ENCODE measurements at regions of chr4 and their contacts with region 1.

Region 1: DNA sequence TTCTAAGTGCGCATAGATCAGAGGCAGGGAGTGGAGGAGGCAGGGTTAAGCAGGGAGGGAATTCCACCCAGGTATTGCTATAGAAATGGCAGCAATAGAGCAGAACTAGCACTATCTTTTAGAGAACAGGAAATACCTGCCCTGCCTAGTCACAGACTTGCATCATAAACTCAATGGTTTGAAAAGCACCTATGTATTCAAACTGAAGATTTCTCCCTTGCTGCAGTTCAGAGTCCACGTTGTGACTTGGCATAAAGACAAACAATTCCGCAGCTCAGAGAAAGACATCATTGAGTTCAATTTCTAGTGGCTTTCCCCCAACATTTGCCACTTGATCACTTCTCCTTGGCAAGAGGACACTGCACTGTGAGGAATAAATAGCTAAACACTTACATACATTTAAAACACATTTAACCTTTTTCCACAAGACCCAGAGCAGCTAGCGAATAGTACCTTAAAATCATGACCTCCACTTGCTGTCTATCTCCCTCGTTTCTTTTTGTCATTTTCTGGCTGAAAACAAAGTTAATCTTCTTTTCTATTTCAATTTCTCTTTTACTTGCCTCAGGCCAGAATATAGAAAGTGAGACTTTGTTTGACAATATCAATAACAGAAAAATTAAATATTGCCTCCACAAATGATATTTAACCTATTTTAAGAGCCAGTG is 42.4 kb downstream of the SLC7A11 start:
- DNase-seq: no peak
- ATAC-seq: peak; percentile 89
- H3K4me3 ChIP-seq: peak overlapping the region; percentile 53; the same call in 1 of the 2 replicates
- H3K27ac ChIP-seq: peak overlapping the region; percentile 74
- H3K4me1 ChIP-seq: peaks cover 3% of the 10 kb centered on the region; the same call in 1 of the 2 replicates
- H3K27me3 ChIP-seq: no peaks in the 10 kb centered on the region
- CTCF ChIP-seq: no peak
- EP300 ChIP-seq: no peak
- POLR2A ChIP-seq: no peak
- RAD21 ChIP-seq: no peak

Region 2: GRCh38 chr4:138003248-138003647 is 196.5 kb before region 1 on chr4:
- CTCF ChIA-PET with region 1: no interaction called
- POLR2A ChIA-PET with region 1: no interaction called
- RAD21 ChIA-PET with region 1: no interaction called
- SMC1A ChIA-PET with region 1: no interaction called
- in situ Hi-C with region 1: no loop called
- intact Hi-C with region 1: no loop called
- DNase-seq: no peak
- ATAC-seq: peak; percentile 82
- H3K4me3 ChIP-seq: no peak overlapping the region
- H3K27ac ChIP-seq: no peak overlapping the region
- H3K4me1 ChIP-seq: no peaks in the 10 kb centered on the region
- H3K27me3 ChIP-seq: no peaks in the 10 kb centered on the region
- CTCF ChIP-seq: no peak
- EP300 ChIP-seq: peak in 1 of 2 experiments; percentile 18; a peak in 1 of 4 replicates
- POLR2A ChIP-seq: no peak
- RAD21 ChIP-seq: no peak

Region 3: GRCh38 chr4:138217567-138217966 is 17.9 kb after region 1 on chr4:
- CTCF ChIA-PET with region 1: interaction called, 11 read pairs
- POLR2A ChIA-PET with region 1: interaction called, 3 read pairs
- RAD21 ChIA-PET with region 1: interaction called, 3 read pairs
- SMC1A ChIA-PET with region 1: interaction called, 21 read pairs
- in situ Hi-C with region 1: no loop called
- intact Hi-C with region 1: no loop called
- DNase-seq: no peak
- ATAC-seq: no peak
- H3K4me3 ChIP-seq: no peak overlapping the region
- H3K27ac ChIP-seq: no peak overlapping the region
- H3K4me1 ChIP-seq: no peaks in the 10 kb centered on the region
- H3K27me3 ChIP-seq: no peaks in the 10 kb centered on the region
- CTCF ChIP-seq: no peak
- EP300 ChIP-seq: no peak
- POLR2A ChIP-seq: no peak
- RAD21 ChIP-seq: no peak

Region 4: DNA sequence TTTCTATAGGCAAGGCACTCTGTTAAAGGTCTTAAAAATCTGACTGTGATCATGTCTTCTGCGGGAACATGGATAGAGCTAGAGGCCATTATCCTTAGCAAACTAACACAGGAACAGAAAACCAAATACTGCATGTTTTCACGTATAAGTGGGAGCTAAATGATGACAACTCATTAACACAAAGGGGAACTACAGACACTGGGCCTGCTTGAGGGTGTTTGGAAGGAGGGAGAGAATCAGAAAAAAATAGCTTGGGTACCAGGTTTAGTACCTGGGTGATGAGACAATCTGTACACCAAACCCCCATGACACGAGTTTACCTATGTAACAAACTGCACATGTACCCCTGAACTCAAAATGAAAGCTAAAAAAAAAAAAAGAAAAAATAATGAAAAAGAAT is 30.3 kb after region 1 on chr4:
- CTCF ChIA-PET with region 1: interaction called, 3 read pairs
- POLR2A ChIA-PET with region 1: interaction called, 12 read pairs
- RAD21 ChIA-PET with region 1: interaction called, 18 read pairs
- SMC1A ChIA-PET with region 1: interaction called, 68 read pairs
- in situ Hi-C with region 1: no loop called
- intact Hi-C with region 1: no loop called
- DNase-seq: no peak
- ATAC-seq: peak; percentile 44
- H3K4me3 ChIP-seq: no peak overlapping the region
- H3K27ac ChIP-seq: no peak overlapping the region
- H3K4me1 ChIP-seq: no peaks in the 10 kb centered on the region
- H3K27me3 ChIP-seq: no peaks in the 10 kb centered on the region
- CTCF ChIP-seq: no peak
- EP300 ChIP-seq: no peak
- POLR2A ChIP-seq: no peak
- RAD21 ChIP-seq: no peak

Region 5: GRCh38 chr4:138235419-138235952 is 35.8 kb after region 1 on chr4:
- CTCF ChIA-PET with region 1: interaction called, 8 read pairs
- POLR2A ChIA-PET with region 1: interaction called, 24 read pairs
- RAD21 ChIA-PET with region 1: interaction called, 56 read pairs
- SMC1A ChIA-PET with region 1: interaction called, 68 read pairs
- in situ Hi-C with region 1: no loop called
- intact Hi-C with region 1: no loop called
- DNase-seq: no peak
- ATAC-seq: peak; percentile 58
- H3K4me3 ChIP-seq: no peak overlapping the region
- H3K27ac ChIP-seq: peak overlapping the region; percentile 20; the same call in 1 of the 2 replicates
- H3K4me1 ChIP-seq: no peaks in the 10 kb centered on the region
- H3K27me3 ChIP-seq: no peaks in the 10 kb centered on the region
- CTCF ChIP-seq: no peak
- EP300 ChIP-seq: no peak
- POLR2A ChIP-seq: no peak
- RAD21 ChIP-seq: no peak